Mammary epithelial cell (primary cell): ENCODE measurements at regions of chr1 and their contacts with region 1.

Region 1: DNA sequence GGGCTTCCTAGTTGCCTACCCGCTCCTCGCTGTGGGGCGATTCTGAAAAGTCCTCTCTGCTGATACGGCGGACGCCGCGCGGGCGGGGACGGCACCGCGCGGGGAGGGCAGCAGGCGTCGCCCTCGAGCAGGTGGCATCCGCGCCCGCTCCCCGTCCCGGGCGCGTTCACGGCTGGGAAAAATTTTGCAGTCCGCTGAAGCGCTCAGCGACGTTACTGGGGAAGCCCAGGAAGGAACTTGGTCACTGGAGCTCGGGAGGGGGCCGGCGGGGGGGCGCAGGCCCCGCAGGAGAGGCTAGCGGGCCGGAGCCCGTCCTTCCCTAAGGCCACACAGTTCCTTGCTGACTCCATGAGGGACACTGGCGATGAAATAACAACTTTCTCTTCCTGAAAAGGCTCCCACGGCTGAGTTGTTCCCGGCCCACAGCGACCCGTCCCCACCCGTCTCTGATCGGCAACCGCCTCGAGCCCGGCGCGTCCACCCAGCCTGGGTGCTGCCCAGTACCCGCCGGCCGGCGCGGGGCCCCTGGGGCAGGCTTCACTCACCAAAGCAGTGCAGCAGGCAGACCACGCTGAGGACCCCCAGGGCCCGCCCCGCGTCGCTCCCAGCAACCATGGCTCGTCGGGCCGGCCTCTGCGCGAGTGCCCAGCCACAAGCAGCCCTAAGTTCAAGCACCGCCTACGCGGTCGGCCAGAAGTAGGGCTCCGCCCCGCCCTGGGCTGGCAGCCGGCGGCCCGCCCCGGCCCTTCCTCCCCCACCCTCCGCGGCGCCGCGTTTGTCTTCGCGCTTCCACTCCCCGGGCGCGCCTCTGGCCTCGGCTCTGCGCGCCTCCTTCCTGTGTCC is at the start of gene CD58:
- DNase-seq: peak; percentile 86
- H3K4me3 ChIP-seq: peak within 1 kb of the TSS; percentile 81 to 89 (median 88)
- H3K27ac ChIP-seq: peak within 1 kb of the TSS; percentile 83
- H3K4me1 ChIP-seq: peaks cover 20% of the 10 kb centered on the region
- H3K27me3 ChIP-seq: no peaks in the 10 kb centered on the region
- CTCF ChIP-seq: peak; percentile 47 to 67
- total RNA-seq, gene CD58: 22.5 to 43.2 TPM

Region 2: GRCh38 chr1:116465845-116466685 is 104.5 kb before region 1 on chr1:
- CTCF ChIA-PET with region 1: no interaction called
- dilution Hi-C with region 1: no loop called
- in situ Hi-C with region 1: no loop called
- intact Hi-C with region 1: no loop called
- DNase-seq: no peak
- H3K4me3 ChIP-seq: no peak overlapping the region
- H3K27ac ChIP-seq: no peak overlapping the region
- H3K4me1 ChIP-seq: no peaks in the 10 kb centered on the region
- H3K27me3 ChIP-seq: no peaks in the 10 kb centered on the region
- CTCF ChIP-seq: no peak

Region 3: DNA sequence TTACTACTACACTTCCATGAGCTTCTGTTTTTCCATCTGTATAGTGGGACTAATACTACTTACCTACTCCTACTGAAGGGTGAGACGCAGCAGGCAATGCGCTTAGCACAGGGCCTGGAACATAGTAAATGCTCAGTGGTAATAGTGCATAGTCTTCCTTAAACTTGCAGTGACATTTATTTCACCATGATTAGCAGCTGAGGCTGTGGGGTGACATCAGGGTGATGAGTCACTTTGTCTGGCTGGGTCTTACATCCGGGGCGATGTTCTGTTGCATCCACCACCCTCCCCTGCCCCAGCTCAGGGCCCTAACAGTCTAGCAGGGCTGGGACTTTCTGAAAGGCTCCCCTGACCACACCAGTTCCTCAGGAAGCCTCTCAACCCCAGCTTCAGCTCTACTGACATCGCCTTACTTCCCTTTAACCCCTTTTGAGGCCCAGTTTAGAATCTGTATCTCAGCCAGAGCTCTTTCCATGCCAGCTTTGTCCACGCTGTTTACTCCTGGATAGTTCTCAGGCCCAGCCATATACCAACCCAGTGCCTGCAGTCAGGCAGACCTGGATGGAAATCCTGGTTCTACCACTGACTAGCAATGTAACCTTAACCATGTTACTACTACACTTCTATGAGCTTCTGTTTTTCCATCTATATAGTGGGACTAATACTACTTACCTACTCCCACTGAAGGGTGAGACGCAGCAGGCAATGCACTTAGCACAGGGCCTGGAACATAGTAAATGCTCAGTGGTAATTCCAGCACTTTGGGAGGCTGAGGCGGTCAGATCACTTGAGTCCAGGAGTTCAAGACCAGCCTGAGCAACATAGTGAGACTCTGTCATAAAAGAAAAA is 66.0 kb before region 1 on chr1:
- CTCF ChIA-PET with region 1: no interaction called
- dilution Hi-C with region 1: no loop called
- in situ Hi-C with region 1: no loop called
- intact Hi-C with region 1: loop called (anchors 5 kb)
- DNase-seq: peak; percentile 60
- H3K4me3 ChIP-seq: no peak overlapping the region
- H3K27ac ChIP-seq: peak overlapping the region; percentile 2
- H3K4me1 ChIP-seq: peaks cover 40% of the 10 kb centered on the region
- H3K27me3 ChIP-seq: no peaks in the 10 kb centered on the region
- CTCF ChIP-seq: no peak

Region 4: GRCh38 chr1:116529199-116529616 is 41.4 kb before region 1 on chr1:
- CTCF ChIA-PET with region 1: no interaction called
- dilution Hi-C with region 1: no loop called
- in situ Hi-C with region 1: no loop called
- intact Hi-C with region 1: no loop called
- DNase-seq: no peak
- H3K4me3 ChIP-seq: no peak overlapping the region
- H3K27ac ChIP-seq: no peak overlapping the region
- H3K4me1 ChIP-seq: no peaks in the 10 kb centered on the region
- H3K27me3 ChIP-seq: no peaks in the 10 kb centered on the region
- CTCF ChIP-seq: no peak

Region 5: GRCh38 chr1:116684575-116684974 is 114.0 kb after region 1 on chr1:
- CTCF ChIA-PET with region 1: interaction called, 10 read pairs
- dilution Hi-C with region 1: no loop called
- in situ Hi-C with region 1: no loop called
- intact Hi-C with region 1: no loop called
- DNase-seq: no peak
- H3K4me3 ChIP-seq: no peak overlapping the region
- H3K27ac ChIP-seq: no peak overlapping the region
- H3K4me1 ChIP-seq: peaks cover 22% of the 10 kb centered on the region
- H3K27me3 ChIP-seq: no peaks in the 10 kb centered on the region
- CTCF ChIP-seq: no peak

Region 6: DNA sequence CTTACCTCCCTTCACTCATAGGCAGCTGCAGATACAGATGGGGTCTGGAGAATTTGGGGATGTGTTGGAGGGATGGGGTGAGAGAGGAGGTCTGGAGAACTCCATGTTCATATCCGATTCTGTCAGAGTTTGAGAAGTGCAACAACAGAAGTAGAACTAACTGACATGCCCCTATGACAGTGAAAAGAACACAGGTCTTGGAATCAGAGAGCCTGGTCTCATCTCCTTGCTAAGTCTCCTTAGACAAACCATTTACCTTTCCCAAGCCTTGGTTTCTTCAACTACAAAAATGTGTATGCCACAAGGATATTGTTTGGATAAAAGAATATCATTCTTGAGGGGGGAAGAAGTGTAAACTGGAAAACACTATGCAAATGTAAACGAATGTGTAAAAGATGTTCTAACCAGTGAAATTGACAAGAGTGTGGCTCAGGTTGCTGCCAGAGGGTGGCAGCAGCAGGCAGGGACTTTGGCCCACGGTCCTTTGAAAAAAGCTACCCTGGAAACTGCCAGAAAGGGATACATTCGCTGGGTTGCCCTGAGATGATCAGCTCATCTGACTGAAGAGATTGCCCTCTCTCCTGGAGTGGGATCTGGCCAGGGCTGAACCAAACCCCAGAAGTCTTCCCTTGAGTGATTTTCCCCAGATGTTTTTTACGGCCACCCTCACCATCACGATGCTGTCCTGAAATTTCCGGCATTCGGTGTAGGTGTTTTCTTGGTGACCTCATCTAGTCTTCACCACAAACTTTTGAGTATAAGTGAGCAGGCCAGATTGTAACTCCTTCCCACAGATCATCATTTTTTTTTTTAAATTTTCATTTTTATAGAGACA is 166.7 kb after region 1 on chr1:
- CTCF ChIA-PET with region 1: no interaction called
- dilution Hi-C with region 1: no loop called
- in situ Hi-C with region 1: no loop called
- intact Hi-C with region 1: loop called (anchors 1 kb)
- DNase-seq: peak; percentile 49
- H3K4me3 ChIP-seq: no peak overlapping the region
- H3K27ac ChIP-seq: no peak overlapping the region
- H3K4me1 ChIP-seq: no peaks in the 10 kb centered on the region
- H3K27me3 ChIP-seq: no peaks in the 10 kb centered on the region
- CTCF ChIP-seq: peak; percentile 84 to 90

Region 7: DNA sequence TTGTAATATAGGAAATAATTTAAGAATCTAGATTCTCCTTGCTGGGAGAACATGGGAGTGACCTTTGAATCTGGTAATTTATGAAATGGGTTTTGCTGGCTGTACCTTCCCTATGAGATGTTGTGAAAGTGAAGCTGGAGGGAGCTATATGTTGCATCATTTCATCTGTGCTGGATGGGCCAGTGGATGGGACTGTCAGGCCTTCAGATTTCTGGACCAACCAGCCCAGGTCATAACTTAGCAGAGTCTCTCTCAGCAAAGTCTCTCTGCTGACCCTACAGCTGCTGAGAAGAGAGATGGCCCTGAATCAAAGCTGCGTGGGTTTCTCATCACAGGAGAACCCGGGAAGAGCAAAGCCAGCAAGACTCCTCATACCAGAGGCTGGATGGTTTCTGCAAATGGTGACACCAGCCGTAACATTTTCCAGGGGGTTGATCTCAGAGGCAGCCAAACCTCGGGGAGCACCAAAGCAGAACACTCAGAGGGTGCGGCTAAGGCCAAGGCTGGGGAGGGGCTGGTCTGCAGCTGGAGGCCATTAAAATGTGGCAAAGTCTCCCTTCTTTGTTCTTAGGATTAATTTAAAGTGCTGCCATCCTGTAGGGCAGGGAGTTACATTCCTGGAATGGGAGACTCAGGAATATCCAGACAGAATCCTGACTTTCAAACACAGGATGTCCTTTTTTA is 321.0 kb after region 1 on chr1:
- CTCF ChIA-PET with region 1: no interaction called
- dilution Hi-C with region 1: no loop called
- in situ Hi-C with region 1: no loop called
- intact Hi-C with region 1: no loop called
- DNase-seq: no peak
- H3K4me3 ChIP-seq: no peak overlapping the region
- H3K27ac ChIP-seq: no peak overlapping the region
- H3K4me1 ChIP-seq: peaks cover 7% of the 10 kb centered on the region
- H3K27me3 ChIP-seq: no peaks in the 10 kb centered on the region
- CTCF ChIP-seq: no peak

Region 8: GRCh38 chr1:116909510-116910378 is 339.2 kb after region 1 on chr1 and contains the start of gene PTGFRN:
- CTCF ChIA-PET with region 1: no interaction called
- dilution Hi-C with region 1: no loop called
- in situ Hi-C with region 1: no loop called
- intact Hi-C with region 1: loop called (anchors 10 kb)
- DNase-seq: peak; percentile 81
- H3K4me3 ChIP-seq: peak within 1 kb of the TSS; percentile 63 to 82 (median 80)
- H3K27ac ChIP-seq: peak within 1 kb of the TSS; percentile 80
- H3K4me1 ChIP-seq: peaks cover 62% of the 10 kb centered on the region
- H3K27me3 ChIP-seq: no peaks in the 10 kb centered on the region
- CTCF ChIP-seq: no peak
- total RNA-seq, gene PTGFRN: 143 to 150 TPM

Region 9: GRCh38 chr1:117059678-117060440 is 489.3 kb after region 1 on chr1 and contains the start of gene TTF2:
- CTCF ChIA-PET with region 1: interaction called, 11 read pairs
- dilution Hi-C with region 1: no loop called
- in situ Hi-C with region 1: no loop called
- intact Hi-C with region 1: loop called (anchors 1 kb)
- DNase-seq: peak; percentile 99
- H3K4me3 ChIP-seq: peak within 1 kb of the TSS; percentile 78 to 99 (median 87)
- H3K27ac ChIP-seq: peak within 1 kb of the TSS; percentile 85
- H3K4me1 ChIP-seq: peaks cover 26% of the 10 kb centered on the region
- H3K27me3 ChIP-seq: no peaks in the 10 kb centered on the region
- CTCF ChIP-seq: peak in 1 of 2 donors; percentile 26
- total RNA-seq, gene TTF2: 15.5 to 41.3 TPM